GM12878 (cell line): ENCODE measurements at regions of chr12 and their contacts with region 1.

Region 1: GRCh38 chr12:104582739-104583138 is 126.0 kb downstream of the CHST11 start:
- DNase-seq: peak; percentile 76
- ATAC-seq: peak; percentile 90
- H3K4me3 ChIP-seq: peak overlapping the region; percentile 37; the same call in 1 of the 2 replicates
- H3K27ac ChIP-seq: peak overlapping the region; percentile 47
- H3K4me1 ChIP-seq: peaks cover 69% of the 10 kb centered on the region
- H3K27me3 ChIP-seq: no peaks in the 10 kb centered on the region
- CTCF ChIP-seq: no peak
- EP300 ChIP-seq: peak; percentile 35 to 79; a peak in 3 of 4 replicates
- POLR2A ChIP-seq: no peak
- RAD21 ChIP-seq: no peak

Region 2: GRCh38 chr12:104329707-104330532 is 252.8 kb before region 1 on chr12:
- CTCF ChIA-PET with region 1: no interaction called
- POLR2A ChIA-PET with region 1: no interaction called
- RAD21 ChIA-PET with region 1: no interaction called
- SMC1A ChIA-PET with region 1: no interaction called
- in situ Hi-C with region 1: no loop called
- intact Hi-C with region 1: no loop called
- DNase-seq: no peak
- ATAC-seq: no peak
- H3K4me3 ChIP-seq: no peak overlapping the region
- H3K27ac ChIP-seq: no peak overlapping the region
- H3K4me1 ChIP-seq: no peaks in the 10 kb centered on the region
- H3K27me3 ChIP-seq: no peaks in the 10 kb centered on the region
- CTCF ChIP-seq: no peak
- EP300 ChIP-seq: no peak
- POLR2A ChIP-seq: no peak
- RAD21 ChIP-seq: no peak

Region 3: GRCh38 chr12:104473374-104473983 is 109.3 kb before region 1 on chr12:
- CTCF ChIA-PET with region 1: interaction called, 7 read pairs
- POLR2A ChIA-PET with region 1: interaction called, 3 read pairs
- RAD21 ChIA-PET with region 1: interaction called, 22 read pairs
- SMC1A ChIA-PET with region 1: interaction called, 22 read pairs
- in situ Hi-C with region 1: no loop called
- intact Hi-C with region 1: loop called (anchors 5 kb)
- DNase-seq: no peak
- ATAC-seq: peak; percentile 76
- H3K4me3 ChIP-seq: peak overlapping the region; percentile 48
- H3K27ac ChIP-seq: peak overlapping the region; percentile 66
- H3K4me1 ChIP-seq: peaks cover 45% of the 10 kb centered on the region
- H3K27me3 ChIP-seq: no peaks in the 10 kb centered on the region
- CTCF ChIP-seq: no peak
- EP300 ChIP-seq: no peak
- POLR2A ChIP-seq: peak; percentile 54; the same call in 1 of the 2 replicates
- RAD21 ChIP-seq: no peak

Region 4: GRCh38 chr12:104494137-104494792 is 88.5 kb before region 1 on chr12:
- CTCF ChIA-PET with region 1: interaction called, 4 read pairs
- POLR2A ChIA-PET with region 1: interaction called, 3 read pairs
- RAD21 ChIA-PET with region 1: interaction called, 6 read pairs
- SMC1A ChIA-PET with region 1: interaction called, 13 read pairs
- in situ Hi-C with region 1: no loop called
- intact Hi-C with region 1: no loop called
- DNase-seq: peak; percentile 57
- ATAC-seq: peak; percentile 77
- H3K4me3 ChIP-seq: peak overlapping the region; percentile 57
- H3K27ac ChIP-seq: peak overlapping the region; percentile 83
- H3K4me1 ChIP-seq: peaks cover 52% of the 10 kb centered on the region
- H3K27me3 ChIP-seq: no peaks in the 10 kb centered on the region
- CTCF ChIP-seq: no peak
- EP300 ChIP-seq: peak in 1 of 2 experiments; percentile 16; a peak in 1 of 4 replicates
- POLR2A ChIP-seq: peak; percentile 50
- RAD21 ChIP-seq: no peak

Region 5: DNA sequence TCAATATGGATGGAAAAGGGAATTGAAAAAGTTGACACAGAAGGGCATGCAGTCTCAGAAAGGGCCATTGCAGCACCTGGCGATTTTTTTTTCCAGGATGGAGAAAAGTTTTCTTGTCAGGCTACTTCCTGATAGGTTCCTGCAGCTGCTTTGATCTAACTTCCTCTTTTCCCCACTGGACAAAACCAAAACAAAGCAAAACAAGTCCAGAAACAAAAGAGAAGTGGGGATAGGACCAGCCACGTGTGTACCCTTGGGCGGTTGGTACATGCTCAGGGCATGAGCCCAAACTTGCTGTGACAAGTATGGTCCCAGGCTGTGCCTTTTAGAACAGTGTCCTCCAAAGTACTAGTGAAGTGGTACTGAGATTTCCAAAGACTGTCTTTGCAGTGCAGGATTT is 36.2 kb before region 1 on chr12:
- CTCF ChIA-PET with region 1: no interaction called
- POLR2A ChIA-PET with region 1: interaction called, 3 read pairs
- RAD21 ChIA-PET with region 1: interaction called, 4 read pairs
- SMC1A ChIA-PET with region 1: interaction called, 12 read pairs
- in situ Hi-C with region 1: no loop called
- intact Hi-C with region 1: no loop called
- DNase-seq: no peak
- ATAC-seq: peak; percentile 51
- H3K4me3 ChIP-seq: no peak overlapping the region
- H3K27ac ChIP-seq: 0 out of 2 replicates have a peak overlapping the region, but pooled peaks have one; percentile 8
- H3K4me1 ChIP-seq: peaks cover 10% of the 10 kb centered on the region
- H3K27me3 ChIP-seq: no peaks in the 10 kb centered on the region
- CTCF ChIP-seq: no peak
- EP300 ChIP-seq: no peak
- POLR2A ChIP-seq: no peak
- RAD21 ChIP-seq: no peak

Region 6: DNA sequence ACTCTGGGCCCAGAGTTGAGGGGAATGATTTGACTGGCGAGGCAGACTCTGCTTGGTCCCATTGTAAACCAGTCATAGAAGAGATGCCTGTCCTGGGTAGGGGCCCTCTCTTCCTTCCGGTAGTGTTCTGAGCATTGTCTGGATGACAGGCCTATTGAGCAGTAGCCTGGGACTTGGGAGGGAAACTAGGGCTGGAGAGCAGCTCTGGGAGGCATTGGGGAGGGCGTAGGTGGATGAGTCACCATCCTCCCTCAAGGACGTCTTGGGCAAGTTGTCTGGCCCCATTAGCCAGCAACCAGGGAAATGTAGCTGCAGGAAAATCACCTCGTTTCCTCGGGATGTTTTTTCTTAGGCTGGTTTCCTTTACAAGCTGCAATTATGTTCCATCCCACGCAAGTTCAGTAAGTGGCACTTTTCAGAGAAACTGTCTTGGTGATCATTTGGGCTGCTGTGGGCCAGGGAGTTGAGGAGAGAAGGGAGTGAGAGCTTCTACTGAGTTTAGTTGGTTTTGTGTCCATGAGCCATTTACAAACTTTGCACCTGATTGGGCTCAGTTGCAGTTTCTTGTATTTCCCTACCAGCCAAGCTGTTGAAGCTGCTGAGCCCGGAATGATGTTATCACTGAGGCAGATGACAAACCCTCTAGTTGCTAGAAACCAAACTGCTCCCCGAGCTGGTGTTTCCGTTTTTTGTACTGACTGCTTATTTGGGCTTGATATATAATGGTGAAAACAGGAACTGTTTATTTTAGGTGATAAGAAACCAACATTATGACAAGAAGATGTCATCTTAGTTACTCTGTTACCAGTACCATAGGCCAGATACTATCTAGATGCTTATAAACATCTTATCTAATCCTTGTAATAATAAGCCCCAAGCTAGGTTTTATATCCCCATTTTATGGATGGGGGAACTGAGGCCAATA is 21.6 kb after region 1 on chr12:
- CTCF ChIA-PET with region 1: interaction called, 4 read pairs
- POLR2A ChIA-PET with region 1: interaction called, 11 read pairs
- RAD21 ChIA-PET with region 1: interaction called, 25 read pairs
- SMC1A ChIA-PET with region 1: interaction called, 21 read pairs
- in situ Hi-C with region 1: no loop called
- intact Hi-C with region 1: no loop called
- DNase-seq: peak; percentile 86
- ATAC-seq: peak; percentile 90
- H3K4me3 ChIP-seq: no peak overlapping the region
- H3K27ac ChIP-seq: peak overlapping the region; percentile 87
- H3K4me1 ChIP-seq: peaks cover 34% of the 10 kb centered on the region
- H3K27me3 ChIP-seq: no peaks in the 10 kb centered on the region
- CTCF ChIP-seq: 0 out of 6 replicates have a peak, but pooled peaks of 1 of the 3 experiments have one; percentile 4
- EP300 ChIP-seq: peak; percentile 36 to 60; a peak in 1 of 4 replicates
- POLR2A ChIP-seq: no peak
- RAD21 ChIP-seq: peak; percentile 32

Region 7: DNA sequence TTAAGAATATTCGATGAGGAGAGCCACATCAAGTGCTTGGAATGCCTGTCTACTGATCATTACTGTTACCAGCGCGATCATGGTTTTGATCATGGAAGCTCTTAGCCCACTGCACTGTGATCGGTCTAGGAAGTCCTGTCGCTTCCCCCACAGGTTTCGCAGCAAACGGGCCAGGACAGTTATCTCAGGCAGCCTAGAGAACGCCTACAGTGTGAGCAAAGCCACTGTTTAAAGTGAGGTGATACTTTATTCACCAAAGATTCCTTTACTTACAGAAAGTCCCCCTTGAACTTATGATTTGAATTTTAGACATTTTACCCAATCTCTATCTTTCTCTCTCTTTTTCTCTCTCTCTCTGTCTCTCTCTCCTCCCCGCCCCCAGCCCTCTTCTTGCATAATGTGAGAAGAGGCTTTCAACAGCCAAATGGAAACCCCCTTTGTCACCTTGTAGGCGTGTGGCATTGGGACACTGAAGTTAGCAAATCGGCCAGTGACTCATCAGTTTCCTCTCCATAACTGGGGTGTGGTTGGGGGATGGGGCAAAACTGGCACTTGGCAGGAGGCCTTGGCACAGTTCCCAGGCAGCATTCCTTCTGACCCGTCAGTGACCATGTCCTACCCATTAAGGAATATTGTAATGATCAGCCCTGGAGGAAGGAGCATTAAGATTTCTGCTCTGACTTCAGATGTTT is 88.8 kb after region 1 on chr12:
- CTCF ChIA-PET with region 1: interaction called, 12 read pairs
- POLR2A ChIA-PET with region 1: interaction called, 3 read pairs
- RAD21 ChIA-PET with region 1: interaction called, 14 read pairs
- SMC1A ChIA-PET with region 1: interaction called, 9 read pairs
- in situ Hi-C with region 1: no loop called
- intact Hi-C with region 1: loop called (anchors 5 kb)
- DNase-seq: peak; percentile 88
- ATAC-seq: peak; percentile 86
- H3K4me3 ChIP-seq: peak overlapping the region; percentile 49
- H3K27ac ChIP-seq: peak overlapping the region; percentile 99
- H3K4me1 ChIP-seq: peaks cover 55% of the 10 kb centered on the region
- H3K27me3 ChIP-seq: no peaks in the 10 kb centered on the region
- CTCF ChIP-seq: no peak
- EP300 ChIP-seq: peak; percentile 84 to 95; a peak in 3 of 4 replicates
- POLR2A ChIP-seq: peak; percentile 73
- RAD21 ChIP-seq: peak; percentile 48

Region 8: DNA sequence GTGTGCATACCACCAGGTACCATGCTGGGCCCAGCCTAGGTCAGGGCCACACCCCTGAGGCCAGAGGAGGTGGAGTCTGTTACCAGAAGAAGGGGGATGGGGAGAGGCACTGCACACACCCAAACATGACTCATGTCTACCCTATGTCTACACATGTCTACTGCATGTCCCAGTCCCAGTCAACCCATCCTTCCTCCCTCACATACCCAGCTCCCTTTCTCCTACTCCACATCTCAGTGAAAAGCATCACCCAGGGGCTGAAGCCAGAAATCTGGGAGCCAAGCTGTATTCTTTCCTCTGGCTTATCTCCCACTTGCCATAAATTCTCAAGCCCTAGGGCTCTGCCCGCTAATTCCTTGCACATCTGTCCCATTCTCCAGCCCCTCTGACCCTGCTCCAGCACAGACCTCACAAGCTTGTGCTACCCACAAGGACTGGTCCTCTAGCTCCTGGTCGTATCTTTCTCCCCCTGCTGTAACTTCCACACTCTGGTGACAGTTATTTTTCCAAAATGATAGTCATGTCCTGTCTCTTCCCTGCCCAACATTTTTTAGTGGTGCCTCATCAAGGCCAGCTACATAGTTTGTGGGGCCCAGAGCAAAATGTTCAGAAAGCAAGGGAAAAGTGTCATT is 671.3 kb after region 1 on chr12:
- CTCF ChIA-PET with region 1: no interaction called
- POLR2A ChIA-PET with region 1: no interaction called
- RAD21 ChIA-PET with region 1: no interaction called
- SMC1A ChIA-PET with region 1: no interaction called
- in situ Hi-C with region 1: no loop called
- intact Hi-C with region 1: no loop called
- DNase-seq: no peak
- ATAC-seq: no peak
- H3K4me3 ChIP-seq: no peak overlapping the region
- H3K27ac ChIP-seq: no peak overlapping the region
- H3K4me1 ChIP-seq: no peaks in the 10 kb centered on the region
- H3K27me3 ChIP-seq: no peaks in the 10 kb centered on the region
- CTCF ChIP-seq: no peak
- EP300 ChIP-seq: no peak
- POLR2A ChIP-seq: no peak
- RAD21 ChIP-seq: no peak